ENCODE measurements at regions of chr11 and their contacts with region 1.

Region 1: DNA sequence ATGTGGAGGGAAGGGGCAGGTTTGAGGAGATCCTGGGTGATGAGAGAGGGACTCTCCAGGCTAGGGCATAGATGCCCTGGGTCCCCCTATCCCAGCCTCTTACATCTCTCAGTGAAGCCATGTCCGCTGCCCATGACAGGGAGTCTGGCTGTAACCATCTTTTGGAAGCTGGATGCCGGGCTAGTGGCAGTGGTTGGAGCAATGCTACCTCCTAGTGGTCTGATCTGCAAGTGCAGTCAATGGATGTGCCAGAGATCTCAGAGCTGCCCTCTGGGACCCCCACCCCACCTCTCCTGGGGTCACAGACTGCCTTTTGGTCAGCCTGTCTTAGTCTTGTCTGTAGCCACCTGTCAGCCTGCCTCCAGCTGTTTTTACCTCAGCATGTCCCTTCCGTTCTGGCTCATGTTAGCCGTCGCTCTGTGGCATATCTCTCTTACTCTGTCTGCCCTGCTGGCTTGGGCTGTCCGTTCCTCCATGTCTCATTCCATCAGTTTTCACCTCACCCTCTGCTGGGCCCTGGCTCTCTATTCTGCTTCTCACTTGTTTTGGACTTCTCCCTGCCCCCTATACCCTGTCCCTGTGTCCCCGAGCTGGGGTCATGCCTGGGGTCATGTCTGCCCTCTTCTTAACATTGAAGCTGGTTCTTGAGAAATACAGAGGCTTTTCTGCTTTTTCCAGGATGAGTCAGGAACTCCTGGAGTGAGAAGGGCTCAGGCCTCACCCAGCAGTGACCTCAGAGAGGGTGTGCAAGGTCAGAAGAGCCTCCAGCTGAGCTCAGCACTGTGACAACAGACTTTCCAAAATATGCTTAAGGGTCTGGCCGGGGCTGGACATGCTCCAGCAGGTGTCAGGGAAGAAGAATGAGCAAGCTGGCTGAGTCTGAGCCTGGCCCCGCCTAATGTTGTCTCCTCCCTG is 52.0 kb upstream of the THY1 start:
- DNase-seq: peak; percentile 76 to 88 (median 83)
- H3K4me3 ChIP-seq: no peak overlapping the region
- H3K27ac ChIP-seq: no peak overlapping the region
- H3K4me1 ChIP-seq: peaks cover 0 to 4% (median 0%) of the 10 kb centered on the region in 3 donors
- H3K27me3 ChIP-seq: no peaks in the 10 kb centered on the region
- CTCF ChIP-seq: peak; percentile 86

Region 2: DNA sequence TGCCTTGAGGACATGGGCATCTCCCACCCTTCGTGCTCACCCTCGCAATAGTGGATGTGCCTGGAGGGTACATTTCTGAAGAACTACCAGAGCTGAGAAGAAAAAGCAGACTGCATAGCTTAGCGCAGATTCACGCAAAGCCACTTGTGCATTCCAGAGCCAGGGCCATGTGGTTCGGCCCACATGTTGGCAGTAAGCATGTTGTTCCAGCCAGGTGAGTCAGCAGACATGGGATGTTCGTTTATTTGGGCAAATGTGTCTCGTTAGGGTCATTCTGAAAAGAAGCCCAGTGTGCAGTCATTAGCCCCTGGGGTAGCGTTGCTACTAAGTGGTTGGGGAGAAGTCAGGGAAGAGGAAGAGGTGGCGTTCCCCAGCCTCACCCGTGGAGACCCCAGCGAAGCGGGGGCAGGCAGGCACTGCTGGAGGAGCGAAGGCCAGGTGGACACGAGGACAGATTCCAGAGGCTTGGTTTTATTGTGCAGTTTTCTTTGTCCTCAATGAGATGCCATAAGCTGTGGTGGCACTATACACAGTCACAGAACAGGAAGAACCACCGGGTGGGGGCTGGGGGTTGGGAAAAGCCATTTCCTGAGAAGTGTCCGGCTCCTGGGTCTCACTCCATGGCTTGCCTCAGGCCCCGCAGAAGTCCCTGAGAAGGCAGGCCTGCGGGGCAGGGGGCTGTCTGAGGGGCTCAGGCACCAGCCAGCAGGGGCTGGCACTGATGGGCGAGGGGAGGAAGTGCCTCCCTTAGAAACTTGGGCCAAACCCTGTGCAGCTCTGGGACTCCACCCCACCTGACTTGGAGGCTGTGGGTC is 57.0 kb before region 1 on chr11:
- intact Hi-C with region 1: no loop called
- DNase-seq: no peak
- H3K4me3 ChIP-seq: no peak overlapping the region
- H3K27ac ChIP-seq: peak overlapping the region in 1 of 2 donors; percentile 24
- H3K4me1 ChIP-seq: peaks cover 3 to 34% (median 30%) of the 10 kb centered on the region in 3 donors
- H3K27me3 ChIP-seq: no peaks in the 10 kb centered on the region
- CTCF ChIP-seq: no peak

Region 3: DNA sequence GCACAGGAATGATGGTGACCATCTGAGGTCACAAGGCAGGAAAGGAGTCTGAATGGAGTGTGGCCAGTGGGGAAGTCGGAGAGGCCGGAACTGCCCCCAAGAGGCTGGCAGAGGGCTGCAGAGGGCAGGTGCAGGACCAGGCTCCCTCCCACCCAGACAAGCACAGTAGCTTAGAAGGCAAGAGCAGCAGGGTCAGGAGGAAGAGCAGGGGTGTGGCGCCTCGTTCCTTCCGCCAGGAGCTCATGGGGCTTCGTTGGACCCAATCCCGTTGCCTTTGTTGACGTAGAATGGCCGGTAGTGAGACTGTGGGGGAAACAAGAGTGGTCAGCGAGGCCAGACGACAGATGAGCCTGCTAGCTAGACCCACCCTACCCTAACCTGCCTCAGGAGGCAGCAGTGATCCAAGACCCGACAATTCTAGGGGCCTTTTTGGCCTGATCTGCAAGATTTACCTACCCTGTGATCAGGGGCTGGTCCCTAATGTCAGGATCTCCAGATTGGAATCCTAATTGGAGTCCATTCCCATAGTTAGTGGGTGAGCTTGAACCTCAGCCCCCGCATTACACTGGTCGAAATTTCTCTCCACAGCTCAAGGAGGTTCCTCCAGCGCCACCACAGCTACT is 637.3 kb after region 1 on chr11:
- intact Hi-C with region 1: loop called (anchors 10 kb)
- DNase-seq: no peak
- H3K4me3 ChIP-seq: no peak overlapping the region
- H3K27ac ChIP-seq: no peak overlapping the region
- H3K4me1 ChIP-seq: no peaks in the 10 kb centered on the region
- H3K27me3 ChIP-seq: no peaks in the 10 kb centered on the region
- CTCF ChIP-seq: no peak

Measured in kidney (tissue), 22 donors.